Prostate gland (tissue), 2 donors: ENCODE measurements at regions of chr12 and their contacts with region 1.

Region 1: DNA sequence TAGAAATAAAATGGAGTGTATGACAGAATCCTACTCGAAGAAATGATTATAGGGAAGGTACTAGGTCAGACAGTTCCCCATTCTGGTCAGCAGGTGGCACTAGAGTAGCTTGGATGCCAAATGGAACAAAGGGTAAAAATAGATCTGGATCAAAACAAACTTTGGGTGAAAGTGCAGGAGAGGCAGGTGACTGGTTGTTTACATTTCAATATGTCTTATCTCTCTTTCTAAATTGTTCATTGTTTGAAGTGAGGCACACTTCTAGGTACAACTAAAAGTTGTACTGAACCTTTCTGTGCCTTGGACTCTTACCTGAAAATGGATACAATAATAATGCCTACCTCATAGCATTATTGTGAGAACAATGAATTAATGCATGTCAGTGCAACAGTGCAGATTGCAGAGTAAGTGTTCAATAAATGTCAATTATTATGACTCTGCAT is 62.0 kb upstream of the OSBPL8 start:
- DNase-seq: peak; percentile 67
- H3K4me3 ChIP-seq: no peak overlapping the region
- H3K27ac ChIP-seq: no peak overlapping the region
- H3K4me1 ChIP-seq: no peaks in the 10 kb centered on the region
- H3K27me3 ChIP-seq: no peaks in the 10 kb centered on the region
- CTCF ChIP-seq: peak; percentile 84 to 96 (median 94)
- POLR2A ChIP-seq: no peak

Region 2: GRCh38 chr12:76790564-76791552 is 169.3 kb after region 1 on chr12:
- intact Hi-C with region 1: loop called (anchors 1 kb)
- DNase-seq: no peak
- H3K4me3 ChIP-seq: no peak overlapping the region
- H3K27ac ChIP-seq: no peak overlapping the region
- H3K4me1 ChIP-seq: no peaks in the 10 kb centered on the region
- H3K27me3 ChIP-seq: no peaks in the 10 kb centered on the region
- CTCF ChIP-seq: peak; percentile 39 to 80 (median 73)
- POLR2A ChIP-seq: no peak

Region 3: DNA sequence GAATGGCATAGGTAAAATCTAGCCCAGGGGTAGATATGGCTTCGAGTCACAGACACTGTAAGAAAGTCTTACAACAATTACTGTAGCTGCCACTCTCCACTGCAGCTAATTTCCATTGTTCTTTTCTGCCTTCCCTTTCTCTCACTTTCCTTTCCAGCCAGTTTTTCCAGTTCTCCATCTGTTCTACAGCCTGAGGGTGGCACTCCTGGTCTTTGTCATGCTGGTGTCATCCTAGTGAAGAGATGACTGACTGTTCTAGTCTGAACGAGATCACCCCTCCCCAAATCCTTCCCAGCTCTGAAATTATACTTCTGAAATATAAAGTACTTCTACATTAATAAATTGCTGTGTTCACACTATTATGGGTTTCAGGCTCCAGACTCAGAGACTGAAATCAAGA is 331.4 kb after region 1 on chr12:
- intact Hi-C with region 1: no loop called
- DNase-seq: peak; percentile 7
- H3K4me3 ChIP-seq: no peak overlapping the region
- H3K27ac ChIP-seq: no peak overlapping the region
- H3K4me1 ChIP-seq: no peaks in the 10 kb centered on the region
- H3K27me3 ChIP-seq: no peaks in the 10 kb centered on the region
- CTCF ChIP-seq: peak in 1 of 4 experiments; percentile 30
- POLR2A ChIP-seq: no peak

Region 4: DNA sequence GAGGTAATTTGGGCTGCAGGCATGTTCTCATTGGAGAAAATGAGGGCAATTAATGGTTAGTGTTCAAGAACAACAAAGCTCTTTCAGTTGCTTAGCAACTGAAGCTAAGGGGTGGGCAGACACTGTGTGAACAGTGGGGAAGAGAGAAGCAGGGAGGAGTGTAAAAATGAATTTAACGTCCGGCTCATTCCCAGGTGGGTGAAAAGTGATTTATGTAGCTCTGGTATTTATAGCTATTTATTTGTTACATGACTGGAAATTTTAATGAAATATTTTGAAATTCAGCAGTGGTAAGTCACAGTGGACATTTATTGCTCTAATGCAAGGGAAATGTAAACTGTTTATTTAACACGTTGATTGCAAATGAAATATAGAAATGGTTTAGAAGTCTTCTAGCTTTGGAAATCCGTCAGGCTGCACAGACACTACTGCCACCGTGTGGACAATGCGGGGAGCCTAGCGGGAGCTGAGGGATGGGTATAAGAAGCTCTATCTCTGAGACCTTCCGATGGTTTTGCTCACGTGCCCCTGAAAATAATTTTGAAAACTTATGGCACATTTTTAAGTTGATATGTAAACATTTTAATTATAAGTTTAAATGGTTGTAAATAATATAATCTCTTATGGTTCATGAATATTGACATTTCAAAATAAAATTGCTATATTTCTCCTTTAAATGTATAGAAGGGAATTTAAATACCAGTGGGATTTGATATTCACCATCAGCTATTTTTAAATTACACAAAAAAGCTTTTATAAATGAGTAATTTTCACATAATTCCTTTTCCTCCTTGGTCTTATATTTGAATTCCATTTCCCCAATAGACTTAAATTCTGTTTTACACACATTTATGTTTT is 389.3 kb after region 1 on chr12:
- intact Hi-C with region 1: loop called (anchors 2 kb)
- DNase-seq: peak; percentile 59
- H3K4me3 ChIP-seq: no peak overlapping the region
- H3K27ac ChIP-seq: no peak overlapping the region
- H3K4me1 ChIP-seq: no peaks in the 10 kb centered on the region
- H3K27me3 ChIP-seq: no peaks in the 10 kb centered on the region
- CTCF ChIP-seq: peak; percentile 41 to 79 (median 74)
- POLR2A ChIP-seq: no peak